MCF 10A (cell line): ENCODE measurements at regions of chr2 and their contacts with region 1.

Region 1: GRCh38 chr2:155377266-155377680 is 678.8 kb downstream of the KCNJ3 start:
- DNase-seq: peak; percentile 47
- H3K4me3 Mint-ChIP-seq: no peak overlapping the region
- H3K27ac Mint-ChIP-seq: no peak overlapping the region
- H3K4me1 Mint-ChIP-seq: no peaks in the 10 kb centered on the region
- H3K27me3 Mint-ChIP-seq: no peaks in the 10 kb centered on the region
- CTCF ChIP-seq: peak; percentile 41

Region 2: GRCh38 chr2:155815886-155816285 is 438.6 kb after region 1 on chr2:
- CTCF ChIA-PET with region 1: interaction called, 6 read pairs
- POLR2A ChIA-PET with region 1: no interaction called
- intact Hi-C with region 1: loop called (anchors 1 kb)
- DNase-seq: peak; percentile 58
- H3K4me3 Mint-ChIP-seq: no peak overlapping the region
- H3K27ac Mint-ChIP-seq: no peak overlapping the region
- H3K4me1 Mint-ChIP-seq: no peaks in the 10 kb centered on the region
- H3K27me3 Mint-ChIP-seq: no peaks in the 10 kb centered on the region
- CTCF ChIP-seq: peak; percentile 21

Region 3: GRCh38 chr2:156892467-156893281 is 1515.4 kb after region 1 on chr2:
- CTCF ChIA-PET with region 1: interaction called, 6 read pairs
- POLR2A ChIA-PET with region 1: interaction called, 3 read pairs
- intact Hi-C with region 1: loop called (anchors 2 kb)
- DNase-seq: peak; percentile 80
- H3K4me3 Mint-ChIP-seq: peak overlapping the region; percentile 69
- H3K27ac Mint-ChIP-seq: peak overlapping the region; percentile 6
- H3K4me1 Mint-ChIP-seq: peaks cover 20% of the 10 kb centered on the region
- H3K27me3 Mint-ChIP-seq: no peaks in the 10 kb centered on the region
- CTCF ChIP-seq: peak; percentile 39

Region 4: GRCh38 chr2:157055660-157056199 is 1678.5 kb after region 1 on chr2:
- CTCF ChIA-PET with region 1: interaction called, 12 read pairs
- POLR2A ChIA-PET with region 1: no interaction called
- intact Hi-C with region 1: no loop called
- DNase-seq: peak; percentile 40
- H3K4me3 Mint-ChIP-seq: peak overlapping the region; percentile 41
- H3K27ac Mint-ChIP-seq: peak overlapping the region; percentile 80
- H3K4me1 Mint-ChIP-seq: peaks cover 19% of the 10 kb centered on the region
- H3K27me3 Mint-ChIP-seq: no peaks in the 10 kb centered on the region
- CTCF ChIP-seq: peak; percentile 41